ENCODE measurements at regions of chr2 and their contacts with region 1.

Region 1: GRCh38 chr2:232315049-232315922 is 63.3 kb upstream of the ALPP start:
- DNase-seq: peak; percentile 89
- H3K4me3 Mint-ChIP-seq: peak overlapping the region; percentile 45
- H3K27ac Mint-ChIP-seq: peak overlapping the region; percentile 89
- H3K4me1 Mint-ChIP-seq: peaks cover 76% of the 10 kb centered on the region
- H3K27me3 Mint-ChIP-seq: no peaks in the 10 kb centered on the region

Region 2: GRCh38 chr2:231780909-231781797 is 534.1 kb before region 1 on chr2 and contains the start of gene PDE6D:
- CTCF ChIA-PET with region 1: interaction called, 3 read pairs
- POLR2A ChIA-PET with region 1: no interaction called
- intact Hi-C with region 1: loop called (anchors 10 kb)
- DNase-seq: peak; percentile 98
- H3K4me3 Mint-ChIP-seq: peak within 1 kb of the TSS; percentile 89
- H3K27ac Mint-ChIP-seq: peak within 1 kb of the TSS; percentile 94
- H3K4me1 Mint-ChIP-seq: peaks cover 52% of the 10 kb centered on the region
- H3K27me3 Mint-ChIP-seq: no peaks in the 10 kb centered on the region
- total RNA-seq, gene PDE6D: 29.5 to 31.1 TPM

Region 3: GRCh38 chr2:232026910-232027309 is 288.4 kb before region 1 on chr2:
- CTCF ChIA-PET with region 1: no interaction called
- POLR2A ChIA-PET with region 1: no interaction called
- intact Hi-C with region 1: loop called (anchors 5 kb)
- DNase-seq: no peak
- H3K4me3 Mint-ChIP-seq: no peak overlapping the region
- H3K27ac Mint-ChIP-seq: peak overlapping the region; percentile 40
- H3K4me1 Mint-ChIP-seq: peaks cover 30% of the 10 kb centered on the region
- H3K27me3 Mint-ChIP-seq: peaks cover 2% of the 10 kb centered on the region

Region 4: GRCh38 chr2:232239951-232240681 is 75.2 kb before region 1 on chr2:
- CTCF ChIA-PET with region 1: interaction called, 4 read pairs
- POLR2A ChIA-PET with region 1: interaction called, 3 read pairs
- intact Hi-C with region 1: loop called (anchors 2 kb)
- DNase-seq: peak; percentile 47
- H3K4me3 Mint-ChIP-seq: no peak overlapping the region
- H3K27ac Mint-ChIP-seq: peak overlapping the region; percentile 81
- H3K4me1 Mint-ChIP-seq: peaks cover 43% of the 10 kb centered on the region
- H3K27me3 Mint-ChIP-seq: no peaks in the 10 kb centered on the region

Region 5: GRCh38 chr2:232292395-232293154 is 22.7 kb before region 1 on chr2:
- CTCF ChIA-PET with region 1: interaction called, 76 read pairs
- POLR2A ChIA-PET with region 1: no interaction called
- intact Hi-C with region 1: no loop called
- DNase-seq: peak; percentile 73
- H3K4me3 Mint-ChIP-seq: no peak overlapping the region
- H3K27ac Mint-ChIP-seq: no peak overlapping the region
- H3K4me1 Mint-ChIP-seq: no peaks in the 10 kb centered on the region
- H3K27me3 Mint-ChIP-seq: no peaks in the 10 kb centered on the region

Region 6: GRCh38 chr2:233846387-233847247 is 1531.3 kb after region 1 on chr2:
- CTCF ChIA-PET with region 1: no interaction called
- POLR2A ChIA-PET with region 1: no interaction called
- intact Hi-C with region 1: no loop called
- DNase-seq: no peak
- H3K4me3 Mint-ChIP-seq: no peak overlapping the region
- H3K27ac Mint-ChIP-seq: no peak overlapping the region
- H3K4me1 Mint-ChIP-seq: peaks cover under 1% of the 10 kb centered on the region
- H3K27me3 Mint-ChIP-seq: no peaks in the 10 kb centered on the region

Measured in activated CD4-positive, alpha-beta memory T cell treated with anti-CD3 and anti-CD28 coated beads for 36 hours (primary cell).